HepG2 (cell line): ENCODE measurements at regions of chr9 and their contacts with region 1.

Region 1: GRCh38 chr9:4640027-4640426 is 22.1 kb upstream of the PLPP6 start:
- DNase-seq: peak; percentile 15
- ATAC-seq: peak; percentile 43; the same call in 2 of the 3 replicates
- H3K4me3 ChIP-seq: no peak overlapping the region
- H3K27ac ChIP-seq: no peak overlapping the region
- H3K4me1 ChIP-seq: no peaks in the 10 kb centered on the region
- H3K27me3 ChIP-seq: no peaks in the 10 kb centered on the region
- CTCF ChIP-seq: peak; percentile 66
- EP300 ChIP-seq: no peak
- POLR2A ChIP-seq: no peak
- RAD21 ChIP-seq: no peak

Region 2: DNA sequence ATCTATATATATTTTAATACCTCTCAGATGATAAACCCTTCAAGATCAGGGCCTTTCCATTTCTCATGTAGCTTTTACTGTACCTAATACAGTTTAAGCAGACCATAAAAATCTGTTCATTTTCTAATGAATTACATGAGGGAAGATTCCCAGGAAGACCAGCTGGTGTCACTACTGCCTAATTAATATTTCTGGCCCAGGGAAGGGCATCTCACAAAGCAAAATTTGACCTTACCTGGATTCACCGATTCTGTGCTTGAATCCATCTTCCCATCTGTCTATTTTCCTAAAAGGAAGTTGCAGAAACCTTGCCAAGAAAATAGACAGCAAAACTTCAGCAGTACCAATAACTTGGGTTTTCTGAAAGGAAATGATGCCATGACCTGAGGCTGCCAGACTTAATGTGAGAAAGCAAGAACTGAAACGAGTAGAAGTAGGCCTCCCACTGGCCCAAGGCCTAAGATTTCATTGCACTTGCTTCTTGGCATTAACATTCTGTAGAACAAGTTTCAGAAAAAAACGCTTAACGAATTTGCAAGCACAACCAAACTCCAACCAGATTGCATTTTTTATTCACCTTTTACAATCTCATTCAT is 257.2 kb before region 1 on chr9:
- CTCF ChIA-PET with region 1: no interaction called
- POLR2A ChIA-PET with region 1: no interaction called
- in situ Hi-C with region 1: loop called (anchors 25 kb)
- intact Hi-C with region 1: loop called (anchors 1 kb)
- DNase-seq: no peak
- ATAC-seq: no peak
- H3K4me3 ChIP-seq: no peak overlapping the region
- H3K27ac ChIP-seq: no peak overlapping the region
- H3K4me1 ChIP-seq: no peaks in the 10 kb centered on the region
- H3K27me3 ChIP-seq: peaks cover 1 to 5% of the 10 kb centered on the region in 2 experiments; a peak in 2 of 5 replicates
- CTCF ChIP-seq: peak; percentile 48
- EP300 ChIP-seq: no peak
- POLR2A ChIP-seq: no peak
- RAD21 ChIP-seq: no peak

Region 3: GRCh38 chr9:4604678-4605095 is 35.3 kb before region 1 on chr9:
- CTCF ChIA-PET with region 1: interaction called, 3 read pairs
- POLR2A ChIA-PET with region 1: no interaction called
- in situ Hi-C with region 1: no loop called
- intact Hi-C with region 1: loop called (anchors 5 kb)
- DNase-seq: peak; percentile 75
- ATAC-seq: peak; percentile 97
- H3K4me3 ChIP-seq: no peak overlapping the region
- H3K27ac ChIP-seq: no peak overlapping the region
- H3K4me1 ChIP-seq: no peaks in the 10 kb centered on the region
- H3K27me3 ChIP-seq: no peaks in the 10 kb centered on the region
- CTCF ChIP-seq: peak; percentile 72
- EP300 ChIP-seq: no peak
- POLR2A ChIP-seq: no peak
- RAD21 ChIP-seq: 0 out of 2 replicates have a peak, but pooled peaks have one; percentile 23